Right ventricle myocardium inferior (tissue), 1 donor: ENCODE measurements at regions of chr5 and their contacts with region 1.

Region 1: DNA sequence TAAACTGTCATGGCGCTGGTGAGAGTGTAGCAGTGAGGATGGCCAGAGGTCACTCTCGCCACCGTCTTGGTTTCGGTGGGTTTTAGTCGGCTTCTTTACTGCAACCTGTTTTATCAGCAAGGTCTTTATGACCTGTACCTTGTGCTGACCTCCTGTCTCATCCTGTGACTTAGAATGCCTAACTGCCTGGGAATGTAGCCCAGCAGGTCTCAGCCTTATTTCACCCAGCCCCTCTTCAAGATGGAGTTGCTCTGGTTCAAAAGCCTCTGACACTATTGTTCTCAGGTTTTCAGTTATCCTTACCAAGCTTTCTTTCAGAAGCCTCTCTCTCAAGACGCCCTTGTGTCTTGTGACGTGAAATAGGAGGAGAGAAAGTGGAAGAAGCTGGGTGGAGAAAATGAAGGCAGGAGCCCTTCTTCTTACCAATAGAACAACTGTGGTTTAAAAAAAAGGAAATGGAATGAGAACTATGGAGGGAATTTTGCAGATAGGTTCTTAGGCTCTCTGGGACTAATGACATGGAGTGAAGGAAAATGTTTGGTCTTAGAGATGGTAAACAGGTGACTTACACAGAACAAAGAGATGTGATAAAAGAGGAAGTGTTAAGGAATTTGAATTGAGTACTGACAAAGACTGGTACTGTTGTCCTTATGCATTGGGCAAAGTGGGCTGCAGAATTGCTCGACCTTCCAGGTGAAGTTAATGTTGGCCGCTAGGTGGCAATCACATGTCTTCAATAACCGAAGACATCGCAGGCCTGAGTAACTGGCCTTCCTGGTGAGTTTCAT is 133.3 kb upstream of the RAI14 start:
- DNase-seq: no peak
- ATAC-seq: peak; percentile 76

Region 2: DNA sequence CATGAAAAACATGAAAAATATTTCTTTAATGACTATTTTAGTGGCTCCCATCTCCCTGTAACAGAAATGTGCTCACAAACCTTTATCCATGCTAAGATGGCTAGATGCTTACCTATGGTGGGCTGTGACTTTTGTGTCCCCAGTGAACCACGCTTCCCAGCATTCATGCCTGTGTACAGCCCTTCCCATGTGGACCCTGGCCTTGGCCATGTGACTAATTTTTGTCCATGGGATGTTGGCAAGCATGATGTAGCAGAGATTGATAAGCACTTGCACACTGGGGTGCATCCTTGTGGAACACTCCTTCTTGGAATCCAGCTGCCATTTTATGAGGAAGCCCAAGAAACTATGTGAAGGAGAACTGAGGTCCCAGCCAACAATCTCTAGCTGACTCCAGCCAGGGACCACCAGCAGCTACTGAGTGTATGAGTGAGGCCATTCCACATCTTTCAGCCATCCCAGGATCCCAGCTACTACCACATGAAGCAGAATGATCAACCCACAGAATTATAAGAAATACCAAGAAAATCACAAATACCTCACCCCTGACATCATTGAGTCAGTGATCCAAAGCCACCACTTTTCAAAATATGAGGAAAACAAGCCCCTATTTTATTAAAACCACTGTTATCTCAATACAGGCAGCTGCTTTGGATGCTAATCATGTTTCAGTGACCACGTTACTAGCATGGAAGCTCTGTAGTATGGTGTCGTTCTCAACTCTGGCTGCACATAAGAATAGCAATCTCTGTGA is 117.2 kb after region 1 on chr5:
- intact Hi-C with region 1: no loop called
- DNase-seq: no peak
- ATAC-seq: no peak

Region 3: GRCh38 chr5:34803974-34804732 is 281.4 kb after region 1 on chr5:
- intact Hi-C with region 1: no loop called
- DNase-seq: no peak
- ATAC-seq: no peak

Region 4: GRCh38 chr5:34838785-34839714 is 316.3 kb after region 1 on chr5 and contains the start of gene TTC23L:
- intact Hi-C with region 1: loop called (anchors 10 kb)
- DNase-seq: peak; percentile 93
- ATAC-seq: peak; percentile 94
- total RNA-seq, gene TTC23L: not detected